Sciatic nerve (tissue), 2 donors: ENCODE measurements at regions of chr4 and their contacts with region 1.

Region 1: GRCh38 chr4:168917138-168917779 is 92.8 kb downstream of the CBR4 start:
- DNase-seq: no peak
- ATAC-seq: peak; percentile 64

Region 2: DNA sequence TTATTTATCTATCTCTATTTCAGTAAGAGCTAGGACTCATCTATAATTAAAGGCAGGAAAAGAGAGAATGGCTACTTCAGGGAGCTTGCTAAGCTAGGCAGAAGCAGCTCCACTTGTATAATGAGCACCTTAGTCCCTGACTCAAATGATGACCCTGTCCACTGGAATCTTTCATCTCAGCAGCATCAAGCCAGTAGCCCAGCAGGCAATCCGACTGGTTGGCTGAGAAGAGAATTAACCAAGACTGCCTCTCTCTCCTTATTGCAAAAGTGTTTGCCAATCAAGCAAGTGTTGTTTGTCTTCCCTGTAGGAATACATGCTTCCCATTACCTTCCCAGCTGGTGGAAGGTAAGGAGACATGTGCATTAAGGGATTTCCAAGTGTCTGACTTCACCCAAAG is 1679.0 kb before region 1 on chr4:
- intact Hi-C with region 1: no loop called
- DNase-seq: no peak
- ATAC-seq: no peak

Region 3: DNA sequence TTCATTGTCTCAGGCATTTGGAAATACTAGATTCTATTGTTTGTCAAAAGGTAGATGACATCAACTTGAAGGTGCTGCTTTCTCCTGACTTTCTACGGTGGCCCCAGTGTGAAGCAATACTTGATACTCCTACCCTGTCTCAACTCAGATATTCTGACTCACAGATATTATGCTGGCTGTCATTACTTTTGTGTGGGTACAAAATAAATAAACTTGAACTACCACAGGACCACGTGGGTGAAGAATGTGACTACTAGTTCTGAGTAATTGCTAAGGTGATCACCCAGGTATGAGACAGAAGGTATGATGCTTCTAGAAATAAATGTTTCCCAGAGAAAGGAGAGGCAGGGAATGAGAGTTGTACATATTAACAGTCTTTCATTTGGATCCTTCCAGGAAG is 1407.7 kb before region 1 on chr4:
- intact Hi-C with region 1: no loop called
- DNase-seq: no peak
- ATAC-seq: no peak

Region 4: DNA sequence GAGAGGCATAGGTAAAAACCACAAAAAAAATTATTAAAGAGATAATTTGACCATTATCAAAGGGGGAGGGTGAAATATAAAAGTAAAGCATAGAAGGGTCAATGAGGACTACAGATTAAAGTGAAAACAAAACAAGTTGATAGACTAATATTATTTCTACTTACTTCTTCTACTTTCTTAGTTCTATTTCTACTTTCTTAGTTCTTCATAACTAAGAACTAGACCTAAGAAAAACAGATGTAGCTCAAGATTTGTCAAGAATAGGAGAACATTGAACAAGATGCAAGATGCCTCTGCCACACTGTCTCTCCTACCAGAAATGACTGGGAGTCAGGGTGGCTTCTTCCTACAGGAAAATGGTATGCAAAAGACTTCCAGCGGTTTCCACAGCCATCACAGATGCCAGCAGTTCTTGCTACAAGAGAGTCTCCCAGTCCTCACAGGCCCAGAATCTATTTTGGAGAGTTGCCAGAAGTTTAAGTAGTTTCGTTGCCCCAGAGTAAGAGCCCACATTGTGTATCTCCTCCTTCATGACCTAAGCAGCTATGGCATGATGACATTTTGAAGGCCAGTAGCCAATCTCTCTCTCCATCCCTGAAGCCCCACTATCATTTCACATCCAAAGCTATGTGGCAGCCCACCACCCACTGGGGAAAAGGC is 555.8 kb before region 1 on chr4:
- intact Hi-C with region 1: no loop called
- DNase-seq: no peak
- ATAC-seq: no peak

Region 5: DNA sequence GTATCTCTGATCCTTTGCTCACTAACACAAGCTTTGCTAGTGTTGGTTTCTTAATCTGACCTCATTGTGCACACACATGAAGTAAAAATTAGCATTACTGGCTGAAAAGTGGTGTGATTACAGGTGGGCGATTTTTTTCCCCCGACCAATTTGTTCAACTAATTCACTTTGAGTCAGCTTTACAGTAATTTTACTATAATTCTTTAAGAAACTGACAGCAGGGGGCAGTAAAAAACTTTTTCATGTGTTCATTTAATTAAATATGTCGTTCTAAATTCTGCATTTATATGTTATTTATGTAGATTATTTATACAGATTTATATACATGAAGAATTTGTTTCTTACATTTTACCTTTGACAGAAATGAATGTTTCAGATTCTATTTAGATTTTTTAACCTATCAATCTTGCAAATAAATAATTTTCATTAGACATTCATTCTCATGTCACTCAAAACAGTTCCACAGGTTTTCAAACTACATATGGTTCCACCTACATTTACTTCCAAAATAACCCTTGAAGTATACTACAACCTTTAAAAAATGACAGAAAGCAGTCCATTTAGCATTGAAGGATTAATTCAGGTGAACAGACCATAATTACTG is 402.9 kb before region 1 on chr4:
- intact Hi-C with region 1: loop called (anchors 10 kb)
- DNase-seq: no peak
- ATAC-seq: no peak

Region 6: GRCh38 chr4:168710353-168710946 is 206.8 kb before region 1 on chr4:
- intact Hi-C with region 1: loop called (anchors 5 kb)
- DNase-seq: no peak
- ATAC-seq: peak; percentile 84

Region 7: DNA sequence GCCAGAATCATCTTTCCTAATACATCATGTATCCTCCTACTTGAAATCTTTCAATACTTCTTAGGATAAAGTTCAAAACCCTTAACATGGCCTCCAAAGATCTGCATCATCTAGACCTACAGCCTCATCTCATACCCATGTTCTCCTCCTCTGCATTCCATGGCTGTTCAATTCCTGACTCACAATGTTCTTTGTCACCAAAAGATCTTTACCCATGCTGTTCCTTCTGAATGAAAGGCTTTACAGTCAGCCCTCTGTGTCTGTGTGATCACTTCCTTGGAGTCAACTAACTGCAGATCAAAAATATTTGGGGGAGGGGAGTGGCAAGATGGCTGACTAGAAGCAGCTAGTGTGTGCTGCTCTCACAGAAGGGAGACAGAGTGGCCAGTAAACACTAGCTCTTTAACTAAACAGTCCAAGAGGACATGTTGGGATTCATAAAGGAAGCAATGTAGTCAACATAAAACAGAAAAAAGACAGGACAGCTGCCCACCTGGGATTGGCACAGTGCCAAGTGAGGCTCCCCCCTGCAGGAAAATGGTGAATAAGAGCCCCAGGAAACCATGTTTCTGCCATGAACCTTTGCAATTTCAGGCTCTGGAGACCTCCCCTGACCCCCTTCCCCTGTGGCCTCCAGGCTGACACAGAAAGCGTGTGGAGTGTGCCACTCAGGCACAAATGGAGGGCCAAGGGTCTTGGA is 60.9 kb after region 1 on chr4:
- intact Hi-C with region 1: no loop called
- DNase-seq: no peak
- ATAC-seq: no peak